ENCODE measurements at regions of chr3 and their contacts with region 1.

Region 1: DNA sequence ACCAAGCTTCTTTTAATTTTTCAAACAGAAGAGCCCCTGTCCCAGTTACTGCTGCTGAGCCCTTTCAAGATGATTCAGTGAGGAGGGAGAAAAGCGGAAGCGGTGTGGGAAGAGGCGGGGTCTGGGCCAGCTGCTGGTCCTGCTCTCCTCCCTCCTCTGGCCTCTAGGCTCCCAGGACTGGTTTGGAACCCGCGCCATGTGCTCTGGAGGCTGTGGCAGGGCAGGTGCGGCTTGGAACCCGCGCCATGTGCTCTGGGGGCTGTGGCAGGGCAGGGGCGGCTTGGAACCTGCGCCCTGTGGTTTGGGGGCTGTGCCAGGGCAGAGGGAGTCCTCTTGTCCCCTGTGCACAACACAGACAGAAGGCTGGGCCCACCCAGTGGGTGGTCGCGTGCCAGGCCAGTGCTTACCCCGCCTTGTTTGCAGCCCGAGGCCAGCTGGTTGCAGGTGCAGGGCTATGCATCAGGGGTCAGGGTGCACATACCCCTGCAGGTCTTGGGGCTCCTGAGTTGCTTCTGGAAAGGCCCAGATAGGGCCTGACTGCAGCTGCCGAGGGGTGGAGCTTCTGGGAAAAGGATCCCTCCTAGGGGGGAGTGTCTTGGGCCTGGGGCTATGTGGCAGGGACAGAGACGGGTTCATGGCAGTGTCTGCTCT is 12.2 kb downstream of the ALG1L2 start:
- DNase-seq: peak; percentile 60
- ATAC-seq: peak; percentile 56
- H3K4me3 ChIP-seq: peak overlapping the region; percentile 18; the same call in 1 of the 2 replicates
- H3K27ac ChIP-seq: peak overlapping the region; percentile 83
- H3K4me1 ChIP-seq: peaks cover 20% of the 10 kb centered on the region
- H3K27me3 ChIP-seq: no peaks in the 10 kb centered on the region
- CTCF ChIP-seq: no peak
- EP300 ChIP-seq: no peak
- POLR2A ChIP-seq: no peak
- RAD21 ChIP-seq: no peak

Region 2: DNA sequence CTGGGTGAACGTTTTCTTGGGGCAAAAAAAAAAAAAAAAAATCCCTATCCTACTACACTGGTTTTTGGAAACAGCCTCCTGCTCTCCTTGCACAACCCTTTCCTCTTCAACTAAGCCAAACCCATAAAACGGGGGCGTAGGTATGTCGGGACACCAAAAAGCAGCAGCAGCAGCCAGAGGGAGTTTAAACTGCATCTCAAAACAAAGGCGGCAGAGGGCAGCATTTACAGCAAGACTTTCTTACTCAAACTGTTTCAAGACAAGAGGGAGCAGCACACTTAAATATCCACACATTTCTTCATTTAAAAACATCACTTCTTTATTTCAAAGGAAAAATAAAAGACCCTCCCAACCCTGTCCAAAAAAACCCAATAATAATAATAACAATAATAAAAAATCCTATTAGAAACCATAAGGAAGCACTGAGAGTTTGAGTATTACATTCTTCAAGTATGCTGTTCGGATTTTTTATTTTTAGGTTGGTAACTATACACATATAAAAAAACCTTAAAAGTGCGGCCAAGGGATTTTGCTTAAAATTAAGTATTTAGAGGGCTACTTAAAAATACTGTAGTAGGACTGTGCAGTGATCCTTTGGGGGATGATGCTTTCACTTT is 443.5 kb before region 1 on chr3:
- CTCF ChIA-PET with region 1: interaction called, 3 read pairs
- POLR2A ChIA-PET with region 1: no interaction called
- RAD21 ChIA-PET with region 1: no interaction called
- SMC1A ChIA-PET with region 1: no interaction called
- in situ Hi-C with region 1: no loop called
- intact Hi-C with region 1: loop called (anchors 10 kb)
- DNase-seq: no peak
- ATAC-seq: peak; percentile 85
- H3K4me3 ChIP-seq: no peak overlapping the region
- H3K27ac ChIP-seq: no peak overlapping the region
- H3K4me1 ChIP-seq: no peaks in the 10 kb centered on the region
- H3K27me3 ChIP-seq: no peaks in the 10 kb centered on the region
- CTCF ChIP-seq: peak; percentile 63 to 82 (median 69); a peak in 5 of 6 replicates
- EP300 ChIP-seq: no peak
- POLR2A ChIP-seq: no peak
- RAD21 ChIP-seq: peak; percentile 89

Region 3: DNA sequence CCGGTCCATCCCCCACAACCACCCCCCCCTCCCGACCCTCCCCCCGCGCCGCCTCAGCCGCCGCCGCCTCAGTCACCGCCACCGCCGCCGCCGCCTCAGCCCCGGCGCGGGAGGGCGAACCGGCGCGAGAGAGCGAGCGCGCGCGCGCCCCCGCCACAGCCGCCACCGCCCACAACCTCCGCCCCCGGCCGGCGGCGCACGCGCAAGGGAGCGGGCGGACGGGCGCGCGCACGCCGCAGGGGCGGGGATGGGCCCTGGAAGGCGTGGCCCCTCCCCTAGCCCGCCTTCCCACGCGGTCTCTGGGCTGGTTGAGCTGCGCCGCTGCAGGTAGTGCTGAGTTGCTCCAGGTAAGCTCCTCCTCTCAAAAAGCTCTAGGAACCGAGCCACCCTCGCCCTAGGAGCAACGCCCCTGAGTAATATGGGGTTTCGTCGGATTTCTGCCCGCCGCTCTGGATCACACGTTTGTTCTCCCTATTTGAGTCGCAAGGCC is 200.2 kb before region 1 on chr3 and contains the start of gene TMCC1:
- CTCF ChIA-PET with region 1: no interaction called
- POLR2A ChIA-PET with region 1: no interaction called
- RAD21 ChIA-PET with region 1: no interaction called
- SMC1A ChIA-PET with region 1: no interaction called
- in situ Hi-C with region 1: no loop called
- intact Hi-C with region 1: loop called (anchors 5 kb)
- DNase-seq: peak; percentile 58
- ATAC-seq: peak; percentile 83
- H3K4me3 ChIP-seq: peak within 1 kb of the TSS; percentile 77
- H3K27ac ChIP-seq: peak within 1 kb of the TSS; percentile 95
- H3K4me1 ChIP-seq: peaks cover 22% of the 10 kb centered on the region
- H3K27me3 ChIP-seq: no peaks in the 10 kb centered on the region
- CTCF ChIP-seq: no peak
- EP300 ChIP-seq: no peak
- POLR2A ChIP-seq: no peak; the same call in 1 of the 2 replicates
- RAD21 ChIP-seq: no peak
- polyA plus RNA-seq, gene TMCC1: 2.3 to 3.1 TPM

Region 4: GRCh38 chr3:129942296-129942695 is 151.6 kb before region 1 on chr3:
- CTCF ChIA-PET with region 1: interaction called, 30 read pairs
- POLR2A ChIA-PET with region 1: no interaction called
- RAD21 ChIA-PET with region 1: interaction called, 9 read pairs
- SMC1A ChIA-PET with region 1: interaction called, 7 read pairs
- in situ Hi-C with region 1: no loop called
- intact Hi-C with region 1: loop called (anchors 2 kb)
- DNase-seq: no peak
- ATAC-seq: peak; percentile 97
- H3K4me3 ChIP-seq: no peak overlapping the region
- H3K27ac ChIP-seq: no peak overlapping the region
- H3K4me1 ChIP-seq: no peaks in the 10 kb centered on the region
- H3K27me3 ChIP-seq: peaks cover 0 to 2% of the 10 kb centered on the region in 2 experiments; a peak in 1 of 4 replicates
- CTCF ChIP-seq: peak; percentile 48 to 69 (median 68)
- EP300 ChIP-seq: no peak
- POLR2A ChIP-seq: no peak
- RAD21 ChIP-seq: peak; percentile 78

Region 5: DNA sequence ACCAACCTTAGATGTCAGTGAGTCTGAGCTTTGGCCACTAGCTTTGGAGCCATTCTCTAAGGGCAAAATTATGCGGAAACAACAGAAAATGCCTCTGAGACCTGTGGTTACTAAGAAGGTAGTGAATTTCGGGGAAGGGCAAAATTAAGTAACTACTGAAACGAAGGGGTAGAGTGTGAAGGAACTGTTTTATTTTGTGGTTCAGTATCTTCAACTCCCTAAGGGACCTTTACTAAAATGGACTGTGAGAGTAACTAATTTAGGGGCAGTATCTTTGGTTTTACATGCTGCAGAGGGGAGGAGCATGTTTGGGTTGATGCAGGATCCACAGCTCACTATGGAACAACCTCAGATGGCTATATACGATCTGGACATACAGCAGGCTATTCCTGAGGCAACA is 20.3 kb before region 1 on chr3:
- CTCF ChIA-PET with region 1: no interaction called
- POLR2A ChIA-PET with region 1: no interaction called
- RAD21 ChIA-PET with region 1: no interaction called
- SMC1A ChIA-PET with region 1: no interaction called
- in situ Hi-C with region 1: no loop called
- intact Hi-C with region 1: no loop called
- DNase-seq: no peak
- ATAC-seq: no peak
- H3K4me3 ChIP-seq: no peak overlapping the region
- H3K27ac ChIP-seq: no peak overlapping the region
- H3K4me1 ChIP-seq: no peaks in the 10 kb centered on the region
- H3K27me3 ChIP-seq: no peaks in the 10 kb centered on the region
- CTCF ChIP-seq: no peak
- EP300 ChIP-seq: no peak
- POLR2A ChIP-seq: no peak
- RAD21 ChIP-seq: no peak

Region 6: GRCh38 chr3:130111185-130111864 is 17.5 kb after region 1 on chr3:
- CTCF ChIA-PET with region 1: interaction called, 26 read pairs
- POLR2A ChIA-PET with region 1: interaction called, 6 read pairs
- RAD21 ChIA-PET with region 1: interaction called, 10 read pairs
- SMC1A ChIA-PET with region 1: interaction called, 4 read pairs
- in situ Hi-C with region 1: no loop called
- intact Hi-C with region 1: loop called (anchors 2 kb)
- DNase-seq: peak; percentile 77
- ATAC-seq: peak; percentile 100
- H3K4me3 ChIP-seq: peak overlapping the region; percentile 85
- H3K27ac ChIP-seq: peak overlapping the region; percentile 27
- H3K4me1 ChIP-seq: no peaks in the 10 kb centered on the region
- H3K27me3 ChIP-seq: no peaks in the 10 kb centered on the region
- CTCF ChIP-seq: no peak
- EP300 ChIP-seq: no peak
- POLR2A ChIP-seq: peak; percentile 57
- RAD21 ChIP-seq: no peak